ENCODE measurements at regions of chr12 and their contacts with region 1.

Region 1: GRCh38 chr12:55996715-55997534 is at the start of gene SUOX:
- DNase-seq: peak; percentile 98
- H3K4me3 Mint-ChIP-seq: peak within 1 kb of the TSS; percentile 92
- H3K27ac Mint-ChIP-seq: peak within 1 kb of the TSS; percentile 28
- H3K4me1 Mint-ChIP-seq: peaks cover 12% of the 10 kb centered on the region
- H3K27me3 Mint-ChIP-seq: no peaks in the 10 kb centered on the region
- CTCF ChIP-seq: no peak
- total RNA-seq, gene SUOX: 6.3 and 7.9 TPM in 2 replicates

Region 2: DNA sequence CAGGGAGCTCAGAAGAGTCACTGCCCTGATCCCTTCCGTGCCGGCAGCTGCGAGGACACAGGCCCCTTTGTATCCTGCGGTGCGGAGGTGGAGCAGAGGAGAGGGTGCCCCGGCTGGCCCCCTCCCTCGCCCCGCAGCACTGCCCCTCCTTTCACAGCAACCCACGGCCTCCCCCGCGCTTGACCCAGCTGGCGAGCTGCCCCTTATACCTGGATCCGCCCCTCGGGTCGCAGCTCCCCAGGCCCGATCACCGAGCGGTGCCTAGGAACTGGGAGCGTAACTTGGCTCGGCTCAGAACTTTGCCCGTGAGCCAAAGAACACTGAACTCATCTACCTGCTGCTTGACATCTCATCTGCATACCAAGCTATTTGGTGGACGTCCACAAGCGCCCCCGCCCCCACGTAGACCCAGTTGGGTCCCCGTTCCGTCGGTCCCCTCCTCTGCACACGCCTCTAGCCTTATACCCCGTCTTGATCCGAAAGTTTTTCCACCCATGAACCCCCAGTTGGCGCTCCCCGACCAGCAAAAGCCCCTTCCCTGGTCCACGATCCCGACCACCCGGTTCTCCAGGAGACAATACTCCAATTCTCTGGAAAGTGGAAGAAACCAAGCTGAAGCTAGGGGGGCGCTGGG is 166.8 kb before region 1 on chr12:
- CTCF ChIA-PET with region 1: no interaction called
- POLR2A ChIA-PET with region 1: interaction called, 13 read pairs
- intact Hi-C with region 1: no loop called
- DNase-seq: peak; percentile 13
- H3K4me3 Mint-ChIP-seq: peak overlapping the region; percentile 97
- H3K27ac Mint-ChIP-seq: peak overlapping the region; percentile 92
- H3K4me1 Mint-ChIP-seq: peaks cover 28% of the 10 kb centered on the region
- H3K27me3 Mint-ChIP-seq: no peaks in the 10 kb centered on the region
- CTCF ChIP-seq: no peak

Region 3: GRCh38 chr12:55966408-55967281 is 30.3 kb before region 1 on chr12 and contains the start of gene CDK2:
- CTCF ChIA-PET with region 1: interaction called, 14 read pairs
- POLR2A ChIA-PET with region 1: interaction called, 5 read pairs
- intact Hi-C with region 1: no loop called
- DNase-seq: peak; percentile 88
- H3K4me3 Mint-ChIP-seq: peak within 1 kb of the TSS; percentile 93
- H3K27ac Mint-ChIP-seq: peak within 1 kb of the TSS; percentile 95
- H3K4me1 Mint-ChIP-seq: peaks cover 28% of the 10 kb centered on the region
- H3K27me3 Mint-ChIP-seq: no peaks in the 10 kb centered on the region
- CTCF ChIP-seq: no peak
- total RNA-seq, gene CDK2: 17.9 and 23.8 TPM in 2 replicates

Region 4: DNA sequence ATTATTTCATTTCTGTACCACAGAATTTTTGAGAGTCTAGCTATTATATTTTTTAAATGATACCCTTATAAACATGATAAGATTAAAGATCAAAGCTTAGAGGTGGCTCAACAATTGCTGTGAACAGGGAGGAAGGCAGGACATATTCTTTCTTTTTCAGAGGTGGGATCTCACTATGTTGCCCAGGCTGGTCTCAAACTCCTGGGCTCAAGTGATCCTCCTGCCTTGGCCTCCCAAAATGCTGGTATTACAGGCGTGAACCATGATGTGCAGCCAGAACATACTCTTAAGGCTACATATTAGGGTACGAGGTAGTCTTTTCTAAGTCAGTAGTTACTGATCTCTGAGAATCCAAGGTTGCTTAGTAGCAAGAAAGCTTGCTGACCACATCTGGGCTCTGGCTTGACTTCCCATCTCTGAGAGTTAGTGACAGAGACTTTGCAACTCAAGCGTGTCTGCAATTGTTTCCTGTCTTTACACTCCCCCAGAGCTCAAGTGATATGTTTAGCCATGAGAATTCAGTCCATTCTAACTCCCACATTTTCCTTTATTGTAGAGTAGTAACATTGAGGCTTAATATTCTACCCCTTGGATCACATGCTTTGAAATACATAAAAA is 14.5 kb before region 1 on chr12:
- CTCF ChIA-PET with region 1: interaction called, 80 read pairs
- POLR2A ChIA-PET with region 1: interaction called, 27 read pairs
- intact Hi-C with region 1: no loop called
- DNase-seq: no peak
- H3K4me3 Mint-ChIP-seq: no peak overlapping the region
- H3K27ac Mint-ChIP-seq: no peak overlapping the region
- H3K4me1 Mint-ChIP-seq: peaks cover 5% of the 10 kb centered on the region
- H3K27me3 Mint-ChIP-seq: no peaks in the 10 kb centered on the region
- CTCF ChIP-seq: no peak

Region 5: DNA sequence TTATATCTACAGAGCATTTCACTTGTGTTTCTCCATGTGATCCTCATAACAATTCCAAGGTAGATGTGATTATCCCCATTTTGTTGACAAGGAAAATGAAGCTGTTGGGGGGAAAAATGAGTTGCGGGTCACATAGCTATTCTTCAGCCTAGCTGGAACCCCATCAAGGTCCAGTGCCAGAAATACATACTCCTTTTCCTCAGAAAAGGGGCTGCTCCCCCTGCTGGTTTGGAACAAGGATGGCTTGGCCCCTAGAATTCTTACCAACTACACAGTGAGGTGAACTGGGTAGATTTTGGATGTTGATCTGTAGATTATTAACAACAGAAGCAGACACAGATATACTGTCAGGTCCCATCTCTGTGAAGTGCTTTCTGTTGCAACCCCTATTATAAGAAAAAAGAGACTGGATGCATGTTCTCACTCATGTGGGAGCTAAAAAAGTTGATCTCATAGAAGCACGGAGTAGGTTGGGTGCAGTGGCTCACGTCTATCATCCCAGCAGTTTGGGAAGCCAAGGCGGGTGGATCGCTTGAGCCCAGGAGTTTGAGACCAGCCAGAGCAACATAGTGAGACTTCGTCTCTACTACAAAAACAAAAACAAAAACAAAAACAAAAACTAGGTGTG is 32.9 kb after region 1 on chr12:
- CTCF ChIA-PET with region 1: interaction called, 39 read pairs
- POLR2A ChIA-PET with region 1: interaction called, 4 read pairs
- intact Hi-C with region 1: loop called (anchors 1 kb)
- DNase-seq: peak; percentile 69
- H3K4me3 Mint-ChIP-seq: no peak overlapping the region
- H3K27ac Mint-ChIP-seq: no peak overlapping the region
- H3K4me1 Mint-ChIP-seq: peaks cover 11% of the 10 kb centered on the region
- H3K27me3 Mint-ChIP-seq: no peaks in the 10 kb centered on the region
- CTCF ChIP-seq: peak; percentile 68

Region 6: DNA sequence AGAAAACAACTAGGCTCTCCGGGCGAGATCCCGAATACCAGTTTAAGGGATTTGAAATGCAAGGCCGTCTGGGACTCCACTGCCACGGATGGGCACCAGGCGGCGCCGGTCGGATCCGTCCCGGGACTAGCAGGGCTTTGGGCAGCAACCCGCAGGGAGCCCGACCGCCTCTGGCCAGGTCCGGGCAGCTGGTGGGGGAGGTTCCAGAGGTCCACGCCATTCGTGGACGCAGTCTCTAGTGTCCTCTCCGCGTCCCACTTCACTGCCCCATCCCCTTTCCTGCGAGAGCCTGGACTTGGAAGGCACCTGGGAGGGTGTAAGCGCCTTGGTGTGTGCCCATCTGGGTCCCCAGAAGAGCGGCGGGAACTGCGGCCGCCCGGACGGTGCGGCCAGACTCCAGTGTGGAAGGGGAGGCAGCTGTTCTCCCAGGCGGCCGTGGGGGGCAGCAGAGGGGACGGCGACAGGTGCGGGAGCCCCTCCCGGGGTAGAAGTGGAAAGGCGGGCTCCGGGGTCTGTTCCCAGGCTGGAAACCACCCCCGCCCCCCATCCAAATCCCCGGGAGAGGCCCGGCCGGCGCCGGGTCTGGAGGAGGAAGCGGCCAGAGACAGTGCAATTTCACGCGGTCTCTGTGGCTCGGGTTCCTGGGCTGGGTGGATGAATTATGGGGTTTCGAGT is 82.2 kb after region 1 on chr12:
- CTCF ChIA-PET with region 1: no interaction called
- POLR2A ChIA-PET with region 1: interaction called, 6 read pairs
- intact Hi-C with region 1: loop called (anchors 2 kb)
- DNase-seq: peak; percentile 85
- H3K4me3 Mint-ChIP-seq: peak overlapping the region; percentile 87
- H3K27ac Mint-ChIP-seq: no peak overlapping the region
- H3K4me1 Mint-ChIP-seq: no peaks in the 10 kb centered on the region
- H3K27me3 Mint-ChIP-seq: no peaks in the 10 kb centered on the region
- CTCF ChIP-seq: peak; percentile 60

Region 7: DNA sequence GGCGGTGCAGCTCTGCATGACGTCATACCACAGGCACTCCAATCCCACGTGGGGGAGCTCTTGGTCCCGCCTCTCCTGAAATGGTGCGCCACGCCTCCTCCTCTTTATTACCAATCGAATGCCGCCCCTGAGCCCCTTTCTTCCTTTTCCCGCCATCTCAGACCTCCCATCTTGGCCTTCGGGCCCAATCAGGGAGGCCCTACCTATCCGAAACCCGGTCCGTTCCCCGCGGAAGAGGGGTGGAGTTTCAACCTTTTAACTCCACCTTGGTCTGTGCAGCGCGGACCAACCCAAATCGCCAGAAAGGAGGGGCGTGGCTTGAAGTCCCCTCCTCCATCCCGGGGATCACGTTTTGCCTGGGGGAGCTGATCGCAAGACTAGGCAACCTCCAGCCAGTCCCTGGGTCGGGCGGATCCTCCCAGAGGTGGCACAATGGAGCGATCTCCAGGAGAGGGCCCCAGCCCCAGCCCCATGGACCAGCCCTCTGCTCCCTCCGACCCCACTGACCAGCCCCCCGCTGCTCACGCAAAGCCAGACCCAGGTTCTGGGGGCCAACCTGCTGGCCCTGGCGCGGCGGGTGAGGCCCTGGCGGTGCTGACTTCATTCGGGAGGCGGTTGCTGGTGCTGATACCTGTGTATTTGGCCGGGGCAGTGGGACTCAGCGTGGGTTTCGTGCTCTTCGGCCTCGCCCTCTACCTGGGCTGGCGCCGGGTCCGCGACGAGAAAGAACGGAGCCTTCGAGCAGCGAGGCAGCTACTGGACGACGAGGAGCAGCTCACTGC is 131.2 kb after region 1 on chr12 and contains the start of gene ESYT1:
- CTCF ChIA-PET with region 1: interaction called, 3 read pairs
- POLR2A ChIA-PET with region 1: interaction called, 10 read pairs
- intact Hi-C with region 1: no loop called
- DNase-seq: peak; percentile 100
- H3K4me3 Mint-ChIP-seq: peak within 1 kb of the TSS; percentile 84
- H3K27ac Mint-ChIP-seq: peak within 1 kb of the TSS; percentile 84
- H3K4me1 Mint-ChIP-seq: peaks cover 26% of the 10 kb centered on the region
- H3K27me3 Mint-ChIP-seq: no peaks in the 10 kb centered on the region
- CTCF ChIP-seq: no peak
- total RNA-seq, gene ESYT1: 111 and 123 TPM in 2 replicates

Region 8: DNA sequence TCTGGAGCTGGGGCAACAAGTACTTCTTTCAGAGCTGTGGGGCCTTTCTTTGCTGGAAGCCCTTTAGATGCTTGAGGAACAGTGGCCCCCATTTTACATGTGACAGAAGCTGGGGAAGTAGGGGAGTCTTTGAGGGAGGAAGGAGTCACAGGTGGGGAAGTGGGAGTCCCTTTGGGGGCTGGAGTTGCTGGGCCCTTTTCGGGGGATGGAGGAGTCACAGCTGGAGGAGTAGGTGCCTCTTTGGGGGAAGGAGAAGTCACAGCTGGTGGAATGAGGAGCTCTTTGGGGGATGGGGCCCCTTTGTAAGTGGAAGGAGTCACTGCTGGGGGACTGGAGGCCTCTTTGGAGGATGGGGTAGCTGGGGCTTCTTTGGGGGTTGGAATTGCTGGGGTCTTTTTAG is 719.5 kb after region 1 on chr12:
- CTCF ChIA-PET with region 1: no interaction called
- POLR2A ChIA-PET with region 1: no interaction called
- intact Hi-C with region 1: no loop called
- DNase-seq: no peak
- H3K4me3 Mint-ChIP-seq: no peak overlapping the region
- H3K27ac Mint-ChIP-seq: no peak overlapping the region
- H3K4me1 Mint-ChIP-seq: peaks cover 46% of the 10 kb centered on the region
- H3K27me3 Mint-ChIP-seq: no peaks in the 10 kb centered on the region
- CTCF ChIP-seq: no peak